ENCODE measurements at regions of chr2 and their contacts with region 1.

Region 1: DNA sequence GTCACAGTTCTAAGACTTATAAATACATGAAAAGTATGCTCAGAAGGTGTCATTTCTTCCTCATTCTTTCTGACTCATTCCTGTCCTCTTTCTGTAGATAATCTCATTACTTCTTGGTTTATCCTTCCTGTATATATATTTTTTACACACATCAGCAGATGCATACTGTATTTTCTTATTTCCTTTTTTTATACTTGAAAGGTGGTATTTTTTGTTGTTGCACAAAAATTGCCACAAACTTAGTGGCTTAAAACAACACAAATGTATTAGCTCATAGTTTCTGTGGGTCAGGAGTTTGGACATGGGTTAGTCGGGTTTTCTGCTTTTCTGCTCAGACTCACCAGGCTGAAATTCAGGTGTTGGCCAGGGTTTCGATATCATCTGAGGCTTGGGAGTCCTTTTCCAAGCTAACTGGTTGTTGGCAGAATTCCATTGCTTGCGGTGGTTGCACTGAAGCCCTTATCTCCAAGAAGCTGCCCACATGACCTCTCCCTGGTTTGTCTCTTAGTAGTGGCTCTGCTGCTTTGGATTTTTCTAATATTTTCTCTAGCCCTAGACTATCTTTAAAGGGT is 162.6 kb downstream of the FMNL2 start:
- DNase-seq: no peak
- ATAC-seq: peak; percentile 76
- H3K4me3 ChIP-seq: 0 out of 2 replicates have a peak overlapping the region, but pooled peaks have one; percentile 20
- H3K27ac ChIP-seq: no peak overlapping the region
- H3K4me1 ChIP-seq: peaks cover 24% of the 10 kb centered on the region
- H3K27me3 ChIP-seq: no peaks in the 10 kb centered on the region
- CTCF ChIP-seq: no peak
- EP300 ChIP-seq: 0 out of 4 replicates have a peak, but pooled peaks of 1 of the 2 experiments have one; percentile 39
- POLR2A ChIP-seq: no peak
- RAD21 ChIP-seq: no peak

Region 2: GRCh38 chr2:152407204-152407721 is 90.3 kb before region 1 on chr2:
- CTCF ChIA-PET with region 1: no interaction called
- POLR2A ChIA-PET with region 1: interaction called, 3 read pairs
- RAD21 ChIA-PET with region 1: interaction called, 9 read pairs
- SMC1A ChIA-PET with region 1: interaction called, 7 read pairs
- in situ Hi-C with region 1: no loop called
- intact Hi-C with region 1: loop called (anchors 5 kb)
- DNase-seq: peak; percentile 55
- ATAC-seq: peak; percentile 95
- H3K4me3 ChIP-seq: peak overlapping the region; percentile 20; the same call in 1 of the 2 replicates
- H3K27ac ChIP-seq: peak overlapping the region; percentile 77
- H3K4me1 ChIP-seq: peaks cover 18% of the 10 kb centered on the region
- H3K27me3 ChIP-seq: no peaks in the 10 kb centered on the region
- CTCF ChIP-seq: 0 out of 6 replicates have a peak, but pooled peaks of 1 of the 3 experiments have one; percentile 1
- EP300 ChIP-seq: 0 out of 4 replicates have a peak, but pooled peaks of 1 of the 2 experiments have one; percentile 32
- POLR2A ChIP-seq: peak; percentile 50; the same call in 1 of the 2 replicates
- RAD21 ChIP-seq: no peak

Region 3: DNA sequence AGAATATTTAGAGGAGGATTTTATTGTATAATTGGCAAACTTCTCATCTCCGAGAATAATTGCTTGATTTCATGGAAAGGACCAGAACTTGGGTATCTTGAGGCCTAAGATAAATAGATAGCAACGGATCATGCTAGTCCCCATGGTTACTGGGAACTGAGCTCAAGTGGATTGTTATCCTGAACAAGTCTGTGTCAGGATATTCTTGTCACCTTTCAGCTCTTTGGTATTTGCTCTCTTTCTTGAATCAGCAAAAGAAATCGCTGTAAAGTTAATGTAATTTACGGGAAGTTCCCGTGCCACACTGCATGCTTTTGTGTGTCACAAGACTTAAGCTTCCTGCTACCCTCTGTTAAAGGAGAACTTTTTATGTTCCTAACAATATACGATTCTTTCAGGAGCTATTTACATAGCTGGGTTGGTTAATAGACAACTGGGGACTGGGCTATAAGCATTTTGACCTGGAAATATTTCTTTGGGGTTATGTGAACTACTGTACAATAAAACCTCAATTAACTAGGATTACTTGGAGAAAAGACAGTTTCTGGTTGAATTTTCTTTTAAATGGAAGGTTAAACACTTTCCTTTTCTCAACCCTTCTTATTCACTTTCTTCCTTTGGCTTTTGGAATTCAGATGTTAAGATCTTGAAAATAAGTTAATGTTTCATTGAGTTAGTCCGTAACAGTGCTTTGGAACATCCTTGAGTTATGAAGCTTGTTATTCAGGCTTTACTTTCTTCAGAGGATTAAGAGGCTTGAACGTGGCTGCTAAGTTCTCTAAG is 11.4 kb before region 1 on chr2:
- CTCF ChIA-PET with region 1: interaction called, 5 read pairs
- POLR2A ChIA-PET with region 1: interaction called, 4 read pairs
- RAD21 ChIA-PET with region 1: interaction called, 5 read pairs
- SMC1A ChIA-PET with region 1: interaction called, 38 read pairs
- in situ Hi-C with region 1: no loop called
- intact Hi-C with region 1: no loop called
- DNase-seq: no peak
- ATAC-seq: peak; percentile 27; the same call in 2 of the 3 replicates
- H3K4me3 ChIP-seq: no peak overlapping the region
- H3K27ac ChIP-seq: no peak overlapping the region
- H3K4me1 ChIP-seq: peaks cover 4% of the 10 kb centered on the region
- H3K27me3 ChIP-seq: no peaks in the 10 kb centered on the region
- CTCF ChIP-seq: no peak
- EP300 ChIP-seq: no peak
- POLR2A ChIP-seq: no peak
- RAD21 ChIP-seq: no peak

Region 4: GRCh38 chr2:152566728-152567069 is 69.1 kb after region 1 on chr2:
- CTCF ChIA-PET with region 1: interaction called, 3 read pairs
- POLR2A ChIA-PET with region 1: no interaction called
- RAD21 ChIA-PET with region 1: no interaction called
- SMC1A ChIA-PET with region 1: interaction called, 5 read pairs
- in situ Hi-C with region 1: no loop called
- intact Hi-C with region 1: loop called (anchors 2 kb)
- DNase-seq: peak; percentile 64
- ATAC-seq: peak; percentile 54
- H3K4me3 ChIP-seq: no peak overlapping the region
- H3K27ac ChIP-seq: peak overlapping the region; percentile 65
- H3K4me1 ChIP-seq: peaks cover 28% of the 10 kb centered on the region
- H3K27me3 ChIP-seq: no peaks in the 10 kb centered on the region
- CTCF ChIP-seq: no peak
- EP300 ChIP-seq: 0 out of 4 replicates have a peak, but pooled peaks of 1 of the 2 experiments have one; percentile 45
- POLR2A ChIP-seq: no peak
- RAD21 ChIP-seq: no peak

Region 5: DNA sequence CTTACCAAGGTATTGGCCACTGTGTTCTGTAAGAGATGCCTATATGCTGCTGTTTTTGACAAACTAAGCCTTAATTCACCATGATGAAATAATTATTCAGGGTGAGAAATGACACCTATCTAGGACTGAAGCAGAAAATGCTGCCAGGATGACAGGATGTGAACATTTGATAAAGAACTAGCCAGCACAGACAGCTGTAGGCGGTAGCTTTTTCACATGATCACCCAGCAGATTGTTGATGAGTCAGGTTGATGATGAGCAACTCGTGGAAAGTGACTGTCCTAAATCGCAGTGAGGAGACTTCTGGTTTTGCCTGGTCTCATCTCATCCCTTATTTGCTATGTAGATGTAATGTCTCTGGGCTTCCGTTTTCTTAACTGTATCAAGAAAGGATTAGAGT is 75.6 kb after region 1 on chr2:
- CTCF ChIA-PET with region 1: interaction called, 4 read pairs
- POLR2A ChIA-PET with region 1: no interaction called
- RAD21 ChIA-PET with region 1: no interaction called
- SMC1A ChIA-PET with region 1: interaction called, 16 read pairs
- in situ Hi-C with region 1: no loop called
- intact Hi-C with region 1: no loop called
- DNase-seq: peak; percentile 70
- ATAC-seq: peak; percentile 96
- H3K4me3 ChIP-seq: no peak overlapping the region
- H3K27ac ChIP-seq: no peak overlapping the region
- H3K4me1 ChIP-seq: peaks cover 5% of the 10 kb centered on the region; the same call in 1 of the 2 replicates
- H3K27me3 ChIP-seq: no peaks in the 10 kb centered on the region
- CTCF ChIP-seq: no peak
- EP300 ChIP-seq: peak; percentile 65 to 68; a peak in 3 of 4 replicates
- POLR2A ChIP-seq: no peak
- RAD21 ChIP-seq: no peak

Region 6: GRCh38 chr2:152611458-152612231 is 114.1 kb after region 1 on chr2:
- CTCF ChIA-PET with region 1: no interaction called
- POLR2A ChIA-PET with region 1: interaction called, 6 read pairs
- RAD21 ChIA-PET with region 1: interaction called, 3 read pairs
- SMC1A ChIA-PET with region 1: interaction called, 14 read pairs
- in situ Hi-C with region 1: no loop called
- intact Hi-C with region 1: no loop called
- DNase-seq: peak; percentile 64
- ATAC-seq: peak; percentile 88
- H3K4me3 ChIP-seq: peak overlapping the region; percentile 49; the same call in 1 of the 2 replicates
- H3K27ac ChIP-seq: peak overlapping the region; percentile 64
- H3K4me1 ChIP-seq: peaks cover 20% of the 10 kb centered on the region
- H3K27me3 ChIP-seq: no peaks in the 10 kb centered on the region
- CTCF ChIP-seq: no peak
- EP300 ChIP-seq: peak in 1 of 2 experiments; percentile 71; a peak in 2 of 4 replicates
- POLR2A ChIP-seq: no peak
- RAD21 ChIP-seq: no peak

Region 7: GRCh38 chr2:152755029-152755428 is 257.5 kb after region 1 on chr2:
- CTCF ChIA-PET with region 1: no interaction called
- POLR2A ChIA-PET with region 1: no interaction called
- RAD21 ChIA-PET with region 1: no interaction called
- SMC1A ChIA-PET with region 1: no interaction called
- in situ Hi-C with region 1: no loop called
- intact Hi-C with region 1: no loop called
- DNase-seq: peak; percentile 26
- ATAC-seq: peak; percentile 53
- H3K4me3 ChIP-seq: no peak overlapping the region
- H3K27ac ChIP-seq: no peak overlapping the region
- H3K4me1 ChIP-seq: no peaks in the 10 kb centered on the region
- H3K27me3 ChIP-seq: no peaks in the 10 kb centered on the region
- CTCF ChIP-seq: peak; percentile 35 to 66 (median 60); a peak in 5 of 6 replicates
- EP300 ChIP-seq: no peak
- POLR2A ChIP-seq: no peak
- RAD21 ChIP-seq: no peak

Measured in GM12878 (cell line).